ENCODE measurements at regions of chr13 and their contacts with region 1.

Region 1: GRCh38 chr13:49278211-49278610 is 30.5 kb downstream of the CDADC1 start:
- DNase-seq: peak in 2 of 3 donors; percentile 60 to 63
- H3K4me3 ChIP-seq: peak overlapping the region in 1 of 7 experiments; percentile 31
- H3K27ac ChIP-seq: peak overlapping the region in 1 of 2 experiments; percentile 36
- H3K4me1 ChIP-seq: peaks cover 0 to 13% (median 6%) of the 10 kb centered on the region in 4 experiments
- H3K27me3 ChIP-seq: no peaks in the 10 kb centered on the region

Region 2: GRCh38 chr13:49098771-49099512 is 179.3 kb before region 1 on chr13:
- CTCF ChIA-PET with region 1: interaction called, 18 read pairs
- POLR2A ChIA-PET with region 1: no interaction called
- DNase-seq: peak; percentile 45 to 62 (median 50)
- H3K4me3 ChIP-seq: no peak overlapping the region
- H3K27ac ChIP-seq: no peak overlapping the region
- H3K4me1 ChIP-seq: peaks cover 4 to 21% (median 11%) of the 10 kb centered on the region in 4 experiments
- H3K27me3 ChIP-seq: no peaks in the 10 kb centered on the region

Region 3: GRCh38 chr13:49240017-49240416 is 38.2 kb before region 1 on chr13:
- CTCF ChIA-PET with region 1: interaction called, 85 read pairs
- POLR2A ChIA-PET with region 1: interaction called, 5 read pairs
- DNase-seq: peak; percentile 50 to 64 (median 60)
- H3K4me3 ChIP-seq: no peak overlapping the region
- H3K27ac ChIP-seq: no peak overlapping the region
- H3K4me1 ChIP-seq: no peaks in the 10 kb centered on the region
- H3K27me3 ChIP-seq: no peaks in the 10 kb centered on the region

Region 4: DNA sequence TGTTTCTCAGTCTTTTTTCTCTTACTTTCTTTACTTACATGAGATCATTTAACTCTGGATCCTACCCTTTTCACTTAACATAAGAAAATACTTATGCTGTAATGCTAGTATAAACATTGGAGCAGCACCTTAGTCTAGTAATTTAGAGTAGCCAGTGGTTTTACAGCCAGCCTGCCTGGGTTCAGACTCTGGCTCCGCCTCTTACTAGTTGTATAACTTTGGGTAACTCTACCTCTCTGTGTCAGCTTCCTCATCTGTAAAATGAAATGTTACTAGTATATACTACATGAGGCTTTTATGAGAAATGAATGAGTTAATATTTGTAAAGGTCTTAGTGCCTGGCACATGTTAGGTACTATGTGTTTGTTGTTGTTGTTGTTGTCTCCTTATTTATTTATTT is 24.9 kb before region 1 on chr13:
- CTCF ChIA-PET with region 1: interaction called, 53 read pairs
- POLR2A ChIA-PET with region 1: no interaction called
- DNase-seq: peak in 2 of 3 donors; percentile 32 to 40
- H3K4me3 ChIP-seq: peak overlapping the region in 2 of 7 experiments; percentile 6 to 56
- H3K27ac ChIP-seq: peak overlapping the region; percentile 61 to 83
- H3K4me1 ChIP-seq: peaks cover 29 to 89% (median 39%) of the 10 kb centered on the region in 4 experiments
- H3K27me3 ChIP-seq: no peaks in the 10 kb centered on the region

Region 5: DNA sequence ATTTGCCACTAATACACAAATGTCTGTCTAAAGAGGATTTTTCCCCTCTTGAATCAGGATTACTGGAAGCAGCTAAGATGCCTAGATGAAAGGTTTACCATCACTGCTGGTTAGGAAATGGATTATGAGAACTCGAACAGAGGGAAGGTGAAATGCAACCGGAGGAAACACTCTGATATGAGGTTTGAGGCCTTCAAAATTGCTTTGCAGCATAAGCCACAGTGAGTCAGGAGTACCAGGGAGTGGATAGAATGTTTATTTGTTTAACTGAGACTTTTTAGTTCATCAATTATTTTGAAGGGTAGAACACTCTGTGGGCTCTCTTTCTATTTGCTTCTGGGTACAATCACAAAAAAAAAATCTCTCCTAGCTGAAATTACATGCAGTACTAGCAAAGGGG is 12.4 kb before region 1 on chr13:
- CTCF ChIA-PET with region 1: interaction called, 42 read pairs
- POLR2A ChIA-PET with region 1: interaction called, 3 read pairs
- DNase-seq: peak in 2 of 3 donors; percentile 61 to 71
- H3K4me3 ChIP-seq: peak overlapping the region in 1 of 7 experiments; percentile 30
- H3K27ac ChIP-seq: peak overlapping the region; percentile 16 to 78
- H3K4me1 ChIP-seq: peaks cover 0 to 11% (median 3%) of the 10 kb centered on the region in 4 experiments
- H3K27me3 ChIP-seq: no peaks in the 10 kb centered on the region

Region 6: GRCh38 chr13:49395451-49395865 is 117.2 kb after region 1 on chr13:
- CTCF ChIA-PET with region 1: no interaction called
- POLR2A ChIA-PET with region 1: no interaction called
- DNase-seq: no peak
- H3K4me3 ChIP-seq: no peak overlapping the region
- H3K27ac ChIP-seq: no peak overlapping the region
- H3K4me1 ChIP-seq: peaks cover 0 to 2% (median 0%) of the 10 kb centered on the region in 4 experiments
- H3K27me3 ChIP-seq: no peaks in the 10 kb centered on the region

Measured in common myeloid progenitor, CD34-positive (primary cell).